Heart left ventricle (tissue), 16 donors: ENCODE measurements at regions of chr11 and their contacts with region 1.

Region 1: GRCh38 chr11:82996966-82997606 is 74.6 kb downstream of the RAB30 start:
- DNase-seq: no peak
- ATAC-seq: no peak
- H3K4me3 ChIP-seq: no peak overlapping the region
- H3K27ac ChIP-seq: peak overlapping the region in 5 of 12 donors; percentile 8 to 65 (median 40)
- H3K4me1 ChIP-seq: peaks cover 0 to 84% (median 42%) of the 10 kb centered on the region in 12 donors
- H3K27me3 ChIP-seq: no peaks in the 10 kb centered on the region
- CTCF ChIP-seq: no peak
- POLR2A ChIP-seq: no peak

Region 2: GRCh38 chr11:83051760-83052671 is 54.9 kb after region 1 on chr11:
- intact Hi-C with region 1: loop called in 1 of 10 experiments (anchors 10 kb)
- DNase-seq: peak in 4 of 5 donors; percentile 30 to 70 (median 64)
- ATAC-seq: peak; percentile 70 to 78 (median 74)
- H3K4me3 ChIP-seq: no peak overlapping the region
- H3K27ac ChIP-seq: peak overlapping the region in 11 of 12 donors; percentile 38 to 85 (median 66)
- H3K4me1 ChIP-seq: peaks cover 18 to 69% (median 50%) of the 10 kb centered on the region in 12 donors
- H3K27me3 ChIP-seq: no peaks in the 10 kb centered on the region
- CTCF ChIP-seq: no peak
- POLR2A ChIP-seq: no peak

Region 3: GRCh38 chr11:83140696-83141455 is 143.8 kb after region 1 on chr11:
- intact Hi-C with region 1: loop called in 1 of 10 experiments (anchors 10 kb)
- DNase-seq: no peak
- ATAC-seq: no peak
- H3K4me3 ChIP-seq: no peak overlapping the region
- H3K27ac ChIP-seq: no peak overlapping the region
- H3K4me1 ChIP-seq: peaks cover 0 to 4% (median 0%) of the 10 kb centered on the region in 12 donors
- H3K27me3 ChIP-seq: no peaks in the 10 kb centered on the region
- CTCF ChIP-seq: no peak
- POLR2A ChIP-seq: no peak